ENCODE measurements at regions of chr1 and their contacts with region 1.

Region 1: DNA sequence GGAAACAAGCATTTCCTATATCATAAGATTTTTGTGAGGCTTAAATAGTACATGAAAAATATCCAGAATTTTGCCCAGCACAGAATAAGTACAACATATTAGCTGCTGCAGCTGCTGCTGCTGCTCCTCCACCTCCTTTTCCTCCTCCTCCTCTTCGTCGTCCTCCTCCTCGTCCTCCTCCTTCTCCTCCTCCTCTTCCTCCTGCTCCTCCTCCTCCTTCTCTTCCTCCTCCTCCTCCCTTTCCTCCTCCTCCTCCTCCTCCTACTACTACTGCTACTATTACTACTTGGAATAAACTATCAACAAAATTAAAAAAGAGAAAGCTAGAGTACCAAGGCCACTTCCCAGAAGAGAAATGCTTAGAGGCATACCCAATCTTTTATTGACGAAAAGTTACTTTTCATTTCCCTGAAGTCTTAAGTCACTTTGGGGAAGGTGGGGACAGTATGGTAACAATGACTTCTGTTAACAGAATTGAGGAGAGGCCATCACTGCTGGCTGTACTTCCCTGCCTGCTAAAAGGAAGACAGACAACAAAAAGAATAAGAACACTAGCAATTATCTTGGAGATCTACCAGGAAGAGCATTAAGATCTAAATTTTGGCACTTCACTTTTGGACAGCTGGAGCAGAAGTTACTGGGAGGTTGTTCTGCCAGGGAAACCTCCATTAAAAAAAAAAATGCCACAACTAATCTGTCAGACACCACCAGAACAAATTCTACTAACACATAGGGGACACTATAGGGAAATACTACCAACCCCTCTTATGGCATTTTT is 7.1 kb downstream of the DENND1B start:
- DNase-seq: no peak
- ATAC-seq: no peak
- H3K4me3 ChIP-seq: no peak overlapping the region
- H3K4me3 Mint-ChIP-seq: peak overlapping the region in 1 of 3 donors; percentile 22
- H3K27ac ChIP-seq: no peak overlapping the region
- H3K27ac Mint-ChIP-seq: peak overlapping the region in 1 of 2 donors; percentile 57
- H3K4me1 ChIP-seq: peaks cover 0 to 13% of the 10 kb centered on the region in 2 experiments
- H3K4me1 Mint-ChIP-seq: peaks cover 76 to 84% (median 82%) of the 10 kb centered on the region in 3 donors
- H3K27me3 ChIP-seq: no peaks in the 10 kb centered on the region
- H3K27me3 Mint-ChIP-seq: no peaks in the 10 kb centered on the region

Region 2: GRCh38 chr1:197787052-197787451 is 18.8 kb after region 1 on chr1:
- CTCF ChIA-PET with region 1: no interaction called
- POLR2A ChIA-PET with region 1: no interaction called
- DNase-seq: no peak
- ATAC-seq: no peak
- H3K4me3 ChIP-seq: no peak overlapping the region
- H3K4me3 Mint-ChIP-seq: no peak overlapping the region
- H3K27ac ChIP-seq: no peak overlapping the region
- H3K27ac Mint-ChIP-seq: no peak overlapping the region
- H3K4me1 ChIP-seq: no peaks in the 10 kb centered on the region
- H3K4me1 Mint-ChIP-seq: no peaks in the 10 kb centered on the region
- H3K27me3 ChIP-seq: no peaks in the 10 kb centered on the region
- H3K27me3 Mint-ChIP-seq: no peaks in the 10 kb centered on the region

Region 3: GRCh38 chr1:198088360-198089071 is 320.3 kb after region 1 on chr1:
- CTCF ChIA-PET with region 1: interaction called in 1 of 2 experiments, 10 read pairs
- POLR2A ChIA-PET with region 1: no interaction called
- DNase-seq: peak in 4 of 35 experiments; percentile 5 to 60 (median 12)
- ATAC-seq: peak in 1 of 4 experiments; percentile 27
- H3K4me3 ChIP-seq: no peak overlapping the region
- H3K4me3 Mint-ChIP-seq: no peak overlapping the region
- H3K27ac ChIP-seq: no peak overlapping the region
- H3K27ac Mint-ChIP-seq: no peak overlapping the region
- H3K4me1 ChIP-seq: no peaks in the 10 kb centered on the region
- H3K4me1 Mint-ChIP-seq: peaks cover 0 to 2% (median 1%) of the 10 kb centered on the region in 3 donors
- H3K27me3 ChIP-seq: no peaks in the 10 kb centered on the region
- H3K27me3 Mint-ChIP-seq: no peaks in the 10 kb centered on the region